MCF 10A (cell line): ENCODE measurements at regions of chr4 and their contacts with region 1.

Region 1: DNA sequence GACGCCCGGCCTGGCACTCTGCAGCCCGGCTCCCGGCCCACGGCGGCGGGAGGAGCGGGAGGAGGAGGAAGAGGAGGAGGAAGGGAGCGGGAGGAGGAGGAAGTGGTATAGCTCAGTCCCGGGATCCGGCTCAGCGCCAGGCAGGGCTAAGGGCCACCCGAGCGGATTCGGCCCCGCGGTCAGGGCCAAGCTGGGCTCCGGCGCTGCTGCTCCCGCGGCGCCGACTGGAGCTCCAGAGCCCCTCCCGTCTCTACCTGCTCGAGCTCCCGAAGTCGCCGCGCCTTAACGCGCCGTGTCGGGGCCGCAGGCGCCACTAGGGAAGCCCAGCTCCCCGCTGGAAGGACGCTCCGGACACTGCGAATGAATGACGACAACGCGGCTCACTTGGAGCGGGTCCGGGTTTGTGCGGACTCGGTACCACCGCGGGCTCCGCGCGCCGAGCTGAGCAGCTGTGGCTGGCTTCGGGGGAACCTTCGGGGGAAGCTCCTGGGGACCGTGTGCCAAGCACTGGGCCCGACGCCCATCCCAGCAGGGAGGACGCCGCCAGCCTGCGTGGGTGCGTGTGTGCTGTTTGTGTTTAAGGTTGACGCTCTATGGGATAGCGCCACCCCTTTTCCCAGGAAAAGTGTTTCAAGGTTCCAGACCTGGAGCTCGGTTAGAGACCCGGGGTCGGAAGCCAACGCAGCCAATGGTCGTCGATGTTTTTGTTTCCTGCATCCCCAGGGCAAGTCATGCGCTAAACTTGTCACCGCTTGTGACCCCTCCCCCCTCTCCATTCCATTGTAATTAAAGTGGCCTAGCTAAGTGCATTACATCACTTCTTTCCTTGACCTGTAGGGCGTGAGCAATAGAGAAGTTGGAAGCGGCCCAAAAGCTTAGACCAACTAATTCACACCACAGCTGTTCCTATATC is at the start of gene TBC1D9:
- DNase-seq: peak; percentile 92
- H3K4me3 Mint-ChIP-seq: peak within 1 kb of the TSS; percentile 82
- H3K27ac Mint-ChIP-seq: peak within 1 kb of the TSS; percentile 57
- H3K4me1 Mint-ChIP-seq: peaks cover 21% of the 10 kb centered on the region
- H3K27me3 Mint-ChIP-seq: no peaks in the 10 kb centered on the region
- CTCF ChIP-seq: no peak
- total RNA-seq, gene TBC1D9: 17.4 and 23.2 TPM in 2 replicates

Region 2: DNA sequence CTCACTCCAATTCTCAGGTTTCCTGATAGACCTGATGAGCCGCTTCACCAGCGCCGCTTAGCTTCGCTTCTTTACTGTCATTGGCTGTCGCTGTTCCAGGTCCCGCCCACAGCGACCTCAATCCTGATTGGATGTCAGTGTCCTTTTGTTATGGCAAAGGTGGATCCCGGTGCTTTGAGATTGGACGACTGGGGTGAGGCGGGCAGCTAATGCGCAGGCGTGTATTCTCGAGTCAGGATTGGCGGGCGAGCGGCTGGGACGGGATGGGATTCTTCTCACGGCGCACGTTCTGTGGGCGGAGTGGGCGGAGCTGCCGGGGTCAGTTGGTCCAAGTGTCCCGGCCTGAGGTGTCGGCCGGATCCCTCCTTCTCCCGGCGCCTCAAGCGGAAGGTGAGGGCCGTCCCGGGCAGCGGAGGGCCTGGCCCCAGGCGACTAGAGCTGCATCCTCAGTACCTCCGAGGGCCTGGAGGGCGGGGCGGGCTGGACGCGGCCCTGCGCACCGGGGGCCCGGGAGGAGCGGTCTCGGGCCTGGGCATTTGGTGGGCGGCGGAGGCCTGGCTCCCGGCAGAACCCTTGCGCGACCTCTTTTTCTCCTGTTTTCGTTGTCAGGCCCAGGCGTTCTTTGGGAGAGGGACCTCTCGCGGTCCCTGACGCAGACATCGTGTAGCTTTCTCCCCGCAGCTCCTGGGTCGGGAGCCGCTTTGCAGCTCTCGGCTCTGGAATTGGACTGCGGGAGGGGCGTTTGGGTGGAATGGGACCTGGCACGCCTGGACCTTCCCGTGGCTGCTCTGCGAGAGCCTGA is 383.0 kb before region 1 on chr4 and contains the start of gene SCOC:
- CTCF ChIA-PET with region 1: interaction called, 4 read pairs
- POLR2A ChIA-PET with region 1: interaction called, 5 read pairs
- intact Hi-C with region 1: loop called (anchors 5 kb)
- DNase-seq: peak; percentile 100
- H3K4me3 Mint-ChIP-seq: no peak within 1 kb of the TSS
- H3K27ac Mint-ChIP-seq: no peak within 1 kb of the TSS
- H3K4me1 Mint-ChIP-seq: peaks cover 34% of the 10 kb centered on the region
- H3K27me3 Mint-ChIP-seq: no peaks in the 10 kb centered on the region
- CTCF ChIP-seq: no peak
- total RNA-seq, gene SCOC: 49.2 and 57.5 TPM in 2 replicates

Region 3: DNA sequence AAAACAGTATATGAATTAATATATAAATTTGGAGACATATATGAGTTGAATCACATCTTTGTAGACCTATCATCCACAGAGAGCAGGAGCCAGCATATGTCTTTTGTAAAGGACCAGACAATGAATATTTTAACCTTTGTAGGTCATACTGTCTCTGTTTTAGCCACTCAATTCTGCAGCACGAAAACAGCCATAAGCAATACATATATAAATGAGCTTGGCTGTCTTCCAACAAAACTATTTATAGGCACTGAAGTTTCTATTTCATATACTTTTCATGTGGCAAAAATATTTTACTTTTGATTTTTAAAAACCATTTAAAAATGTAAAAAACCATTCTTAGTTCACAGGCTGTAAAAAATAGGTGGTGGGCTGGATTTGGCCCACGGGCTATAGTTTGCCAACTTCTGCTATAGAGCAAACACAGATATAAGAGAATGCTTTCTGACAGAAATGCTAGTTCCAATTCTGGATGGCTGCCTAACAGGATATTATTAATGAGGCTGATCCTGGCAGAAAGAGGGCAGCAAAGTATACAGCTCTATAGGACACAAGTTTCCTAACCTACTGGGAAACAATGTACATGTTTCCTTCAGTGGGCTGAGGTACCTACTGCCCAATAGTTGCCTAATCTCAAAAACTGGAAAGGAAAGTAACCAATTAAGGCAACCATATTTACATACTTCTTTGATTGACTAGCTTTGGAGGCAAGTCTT is 129.8 kb before region 1 on chr4:
- CTCF ChIA-PET with region 1: no interaction called
- POLR2A ChIA-PET with region 1: no interaction called
- intact Hi-C with region 1: loop called (anchors 5 kb)
- DNase-seq: peak; percentile 25
- H3K4me3 Mint-ChIP-seq: no peak overlapping the region
- H3K27ac Mint-ChIP-seq: no peak overlapping the region
- H3K4me1 Mint-ChIP-seq: no peaks in the 10 kb centered on the region
- H3K27me3 Mint-ChIP-seq: no peaks in the 10 kb centered on the region
- CTCF ChIP-seq: no peak

Region 4: GRCh38 chr4:140703463-140703862 is 53.1 kb before region 1 on chr4:
- CTCF ChIA-PET with region 1: no interaction called
- POLR2A ChIA-PET with region 1: interaction called, 11 read pairs
- intact Hi-C with region 1: no loop called
- DNase-seq: no peak
- H3K4me3 Mint-ChIP-seq: no peak overlapping the region
- H3K27ac Mint-ChIP-seq: no peak overlapping the region
- H3K4me1 Mint-ChIP-seq: peaks cover 19% of the 10 kb centered on the region
- H3K27me3 Mint-ChIP-seq: no peaks in the 10 kb centered on the region
- CTCF ChIP-seq: no peak

Region 5: DNA sequence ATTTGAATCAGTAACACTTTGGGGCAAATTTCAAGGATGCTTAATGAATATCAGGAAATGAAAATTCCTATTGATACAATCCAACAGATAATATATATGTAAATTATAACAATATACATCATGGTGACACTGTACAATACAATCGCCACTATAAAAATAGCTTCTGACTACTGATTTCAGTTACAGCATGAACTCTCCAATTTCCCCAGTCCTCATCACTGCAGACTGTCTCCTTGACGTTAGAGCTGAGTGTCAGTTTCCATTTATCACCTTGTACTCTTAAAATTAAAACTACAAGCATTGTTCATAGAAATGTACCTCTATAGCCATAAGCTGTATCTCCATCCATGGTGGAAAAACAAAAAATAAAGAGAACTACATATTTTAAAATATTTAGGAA is 23.8 kb before region 1 on chr4:
- CTCF ChIA-PET with region 1: interaction called, 3 read pairs
- POLR2A ChIA-PET with region 1: interaction called, 12 read pairs
- intact Hi-C with region 1: no loop called
- DNase-seq: no peak
- H3K4me3 Mint-ChIP-seq: no peak overlapping the region
- H3K27ac Mint-ChIP-seq: no peak overlapping the region
- H3K4me1 Mint-ChIP-seq: peaks cover 17% of the 10 kb centered on the region
- H3K27me3 Mint-ChIP-seq: no peaks in the 10 kb centered on the region
- CTCF ChIP-seq: no peak

Region 6: GRCh38 chr4:140790765-140791164 is 34.2 kb after region 1 on chr4:
- CTCF ChIA-PET with region 1: interaction called, 3 read pairs
- POLR2A ChIA-PET with region 1: interaction called, 17 read pairs
- intact Hi-C with region 1: no loop called
- DNase-seq: peak; percentile 44
- H3K4me3 Mint-ChIP-seq: no peak overlapping the region
- H3K27ac Mint-ChIP-seq: peak overlapping the region; percentile 2
- H3K4me1 Mint-ChIP-seq: peaks cover 19% of the 10 kb centered on the region
- H3K27me3 Mint-ChIP-seq: no peaks in the 10 kb centered on the region
- CTCF ChIP-seq: no peak

Region 7: DNA sequence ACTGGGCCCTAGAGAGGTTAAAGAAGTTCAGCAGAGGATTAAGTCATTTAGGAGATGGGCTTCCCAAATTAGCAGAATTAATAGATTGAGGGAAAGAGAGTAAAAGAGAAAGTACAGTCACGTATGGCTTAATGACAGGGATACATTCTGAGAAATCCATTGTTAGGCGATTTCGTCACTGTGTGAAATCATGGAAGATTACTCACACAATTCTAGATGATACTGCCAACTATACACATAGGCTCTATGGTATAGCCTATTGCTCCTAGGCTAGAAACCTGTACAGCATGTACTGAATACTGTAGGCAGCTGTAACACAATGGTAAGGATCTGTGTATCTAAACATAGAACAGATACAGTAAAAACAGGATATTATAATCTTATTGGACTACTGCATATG is 196.1 kb after region 1 on chr4:
- CTCF ChIA-PET with region 1: no interaction called
- POLR2A ChIA-PET with region 1: no interaction called
- intact Hi-C with region 1: no loop called
- DNase-seq: peak; percentile 91
- H3K4me3 Mint-ChIP-seq: peak overlapping the region; percentile 52
- H3K27ac Mint-ChIP-seq: peak overlapping the region; percentile 80
- H3K4me1 Mint-ChIP-seq: peaks cover 8% of the 10 kb centered on the region
- H3K27me3 Mint-ChIP-seq: no peaks in the 10 kb centered on the region
- CTCF ChIP-seq: no peak